ENCODE measurements at regions of chr9 and their contacts with region 1.

Region 1: DNA sequence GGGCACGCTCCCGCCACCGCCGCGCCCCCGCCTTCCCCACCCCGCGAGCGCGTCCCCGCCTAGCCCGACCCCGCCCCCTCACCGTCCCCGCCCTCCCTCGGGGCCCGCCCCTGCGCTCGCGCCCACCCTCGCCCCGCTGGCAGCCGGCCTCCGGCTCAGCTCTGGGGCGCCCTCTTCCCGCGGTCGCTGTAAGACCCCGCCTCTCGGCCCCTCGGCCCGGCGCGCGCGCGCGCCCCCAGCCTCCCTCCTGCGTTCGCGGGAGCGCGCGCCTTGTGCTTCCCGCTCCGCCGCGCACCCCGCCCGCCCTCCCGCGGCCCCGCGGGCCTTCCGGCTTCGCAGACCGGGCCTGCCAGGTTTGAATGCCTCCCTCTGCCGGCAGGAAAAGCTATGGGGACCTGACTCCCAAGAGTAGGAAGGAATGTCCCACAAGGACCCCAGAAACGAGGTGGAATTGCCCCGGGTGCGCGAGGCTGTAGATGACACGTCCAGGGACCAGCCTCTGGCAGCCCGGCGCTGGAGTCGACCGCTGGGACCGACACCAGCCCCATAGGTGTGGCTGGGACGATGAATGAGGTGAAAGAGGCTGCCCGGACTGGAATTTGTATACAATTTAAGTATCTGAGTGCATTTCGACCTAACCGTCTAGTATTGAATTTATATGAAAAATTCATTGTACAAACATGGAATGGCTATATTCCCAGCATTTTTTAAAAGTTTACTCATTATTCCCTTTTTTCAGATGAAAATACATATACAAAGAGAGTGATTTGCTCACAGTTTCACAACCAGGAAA is 416 bp upstream of the PTBP3 start:
- DNase-seq: peak; percentile 98
- ATAC-seq: peak; percentile 96

Region 2: GRCh38 chr9:111896353-111896958 is 437.4 kb before region 1 on chr9 and contains the start of gene UGCG:
- intact Hi-C with region 1: loop called (anchors 5 kb)
- DNase-seq: peak; percentile 95
- ATAC-seq: peak; percentile 99
- total RNA-seq, gene UGCG: 12.8 TPM

Region 3: GRCh38 chr9:112097712-112098688 is 235.8 kb before region 1 on chr9:
- intact Hi-C with region 1: loop called (anchors 1 kb)
- DNase-seq: no peak
- ATAC-seq: peak; percentile 85

Region 4: DNA sequence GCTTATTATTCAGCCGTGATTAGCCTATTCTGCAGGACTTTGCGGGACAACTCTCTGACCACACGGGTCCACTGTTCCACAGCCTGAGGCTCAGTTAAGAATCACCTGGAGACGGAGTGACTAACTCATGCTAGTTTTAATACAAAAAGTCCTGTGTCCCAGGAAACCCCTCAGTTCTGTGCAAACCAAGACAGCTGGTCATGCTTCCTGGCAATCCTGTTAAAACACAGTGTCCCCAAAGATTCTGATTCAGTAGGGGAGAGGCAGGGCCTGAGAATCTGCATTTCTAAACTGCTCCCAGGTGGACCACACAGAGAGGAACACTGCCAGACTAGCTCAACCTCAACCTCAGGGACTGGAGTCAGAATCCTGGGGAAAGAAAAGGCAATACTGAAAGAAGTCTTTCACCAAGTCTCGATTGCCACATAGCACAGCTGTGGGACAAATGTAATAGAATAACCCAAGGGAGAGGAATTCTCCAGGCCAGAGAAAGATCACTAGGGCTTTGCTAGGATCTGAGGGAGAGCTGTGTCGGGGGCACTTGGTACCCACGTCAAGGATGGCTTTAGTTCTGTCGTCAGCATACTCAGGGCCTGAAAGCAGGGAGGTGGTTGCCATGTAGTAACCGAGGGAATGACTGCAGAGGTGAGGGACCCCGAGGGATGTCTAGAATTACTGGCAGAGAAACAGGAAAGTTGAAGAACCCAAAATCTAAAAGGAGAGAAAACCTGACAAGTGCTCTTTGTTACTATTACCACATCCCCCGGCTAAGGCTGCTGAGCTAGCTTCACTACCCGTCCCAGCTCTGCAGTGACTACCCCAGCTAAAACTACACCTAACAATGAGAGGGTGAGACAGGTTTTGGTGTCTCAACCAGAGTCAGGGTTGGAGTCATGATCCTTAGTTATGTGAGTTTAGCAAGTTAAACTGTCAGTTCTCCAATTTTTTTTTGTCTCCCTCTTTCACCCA is 167.4 kb before region 1 on chr9:
- intact Hi-C with region 1: loop called (anchors 5 kb)
- DNase-seq: no peak
- ATAC-seq: peak; percentile 94

Region 5: DNA sequence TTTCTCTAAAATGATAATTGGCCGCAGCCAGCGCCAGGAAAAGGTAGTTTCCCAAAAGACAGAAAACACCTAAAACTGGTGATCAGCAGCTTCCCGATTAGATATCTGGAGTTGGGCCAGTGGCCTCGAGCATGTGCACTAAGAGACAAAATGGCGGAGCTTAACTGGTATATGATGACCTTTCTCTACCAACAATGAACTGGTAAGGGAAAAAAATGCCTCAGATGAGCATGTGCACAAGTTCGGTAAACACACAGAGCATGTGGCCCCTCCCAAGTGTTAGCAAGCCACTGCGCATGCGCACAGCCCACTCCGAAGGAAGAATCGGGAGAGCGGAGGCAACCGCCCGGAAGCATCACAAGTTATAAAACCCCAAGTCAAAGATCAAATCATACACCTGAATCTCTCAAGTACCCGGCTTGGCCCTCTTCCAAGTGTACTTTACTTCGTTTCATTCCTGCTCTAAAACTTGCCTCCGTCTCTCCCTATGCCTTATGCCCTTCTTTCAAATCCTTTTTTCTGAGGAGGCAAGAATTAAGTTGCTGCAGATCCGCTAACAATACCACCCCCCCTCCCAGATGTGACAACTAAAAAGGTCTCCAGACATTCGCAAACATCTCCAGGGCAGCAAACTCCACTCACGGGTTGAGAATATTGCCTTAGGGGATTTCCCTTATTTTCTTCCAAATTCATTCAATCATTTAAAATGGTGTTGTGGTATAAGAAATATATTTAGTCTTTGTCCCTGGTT is 14.6 kb after region 1 on chr9:
- intact Hi-C with region 1: no loop called
- DNase-seq: peak; percentile 95
- ATAC-seq: peak; percentile 86

Region 6: DNA sequence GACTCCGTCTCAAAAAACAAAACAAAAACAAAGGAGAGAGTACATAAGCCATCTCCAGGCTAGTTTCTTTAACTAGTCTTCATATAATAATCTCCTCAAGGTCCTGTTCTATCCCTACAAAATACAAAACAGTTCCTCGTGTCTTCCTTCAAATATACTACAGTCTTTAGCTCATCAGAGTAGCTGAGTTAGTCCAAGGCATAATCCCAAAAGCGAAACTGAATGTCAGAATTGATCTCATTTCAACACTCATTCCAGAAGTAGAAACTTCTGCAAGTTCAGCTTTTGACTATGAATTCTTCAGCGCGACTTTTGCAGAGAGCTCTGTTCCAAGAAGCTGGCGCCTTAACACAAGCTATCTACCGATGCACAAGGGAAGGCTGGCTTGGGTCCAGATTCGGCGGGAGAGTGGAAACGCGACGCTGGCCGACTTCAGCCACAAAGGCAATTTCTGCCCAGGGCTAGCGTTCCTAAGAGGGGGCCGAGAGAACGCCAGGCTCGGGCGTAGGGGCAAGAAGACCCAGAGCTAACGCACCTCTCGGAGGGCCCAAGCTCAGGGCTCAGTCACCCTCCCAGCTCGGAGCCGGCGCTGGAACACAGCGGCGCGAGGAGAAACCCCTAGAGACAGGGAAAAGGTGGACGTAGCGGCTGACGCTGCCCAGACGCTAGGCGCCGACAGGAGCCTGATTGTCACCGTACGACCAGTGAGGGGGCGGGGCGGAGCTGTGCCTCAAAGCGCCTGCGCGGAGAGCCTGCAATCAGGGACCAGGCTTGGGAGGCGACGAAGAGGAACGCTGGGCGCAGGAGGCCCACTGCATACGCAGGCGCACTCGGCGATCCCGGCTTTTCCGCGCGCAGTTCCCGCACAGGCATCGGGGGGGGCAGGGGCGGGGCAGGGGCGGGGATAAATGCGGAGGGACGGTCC is 45.6 kb after region 1 on chr9:
- intact Hi-C with region 1: loop called (anchors 2 kb)
- DNase-seq: peak; percentile 100
- ATAC-seq: peak; percentile 97

Region 7: DNA sequence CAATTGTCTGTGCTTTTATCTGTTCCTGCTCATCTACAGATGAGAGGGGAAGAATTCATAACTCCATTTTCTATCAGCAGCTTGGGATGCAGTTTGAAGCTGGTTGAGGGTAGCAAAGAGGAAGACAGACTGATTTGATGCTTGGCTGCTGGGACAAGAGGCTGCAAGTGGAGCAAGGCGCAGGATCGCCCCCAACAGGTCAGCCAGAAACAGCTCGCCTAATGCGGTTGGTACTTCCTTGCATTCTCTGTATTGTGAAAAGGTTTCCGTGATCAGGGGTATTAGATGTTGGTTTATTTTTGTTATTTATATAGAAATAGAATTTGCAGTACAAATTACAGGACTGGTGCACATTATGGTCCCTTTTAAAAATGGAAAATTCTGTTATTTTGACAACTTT is 637.6 kb after region 1 on chr9:
- intact Hi-C with region 1: no loop called
- DNase-seq: no peak
- ATAC-seq: no peak